ENCODE measurements at regions of chr15 and their contacts with region 1.

Region 1: GRCh38 chr15:64355944-64356709 is at the start of gene CSNK1G1:
- DNase-seq: peak; percentile 57
- H3K4me3 ChIP-seq: peak within 1 kb of the TSS; percentile 68 to 80 (median 72)
- H3K27ac ChIP-seq: peak within 1 kb of the TSS; percentile 79 to 89 (median 81)
- H3K4me1 ChIP-seq: peaks cover 3 to 30% (median 11%) of the 10 kb centered on the region in 3 donors
- H3K27me3 ChIP-seq: no peaks in the 10 kb centered on the region
- CTCF ChIP-seq: peak; percentile 10 to 57 (median 44)
- POLR2A ChIP-seq: peak in 1 of 4 donors; percentile 27
- total RNA-seq, gene CSNK1G1: 15.0 to 21.4 (median 16.8) TPM

Region 2: DNA sequence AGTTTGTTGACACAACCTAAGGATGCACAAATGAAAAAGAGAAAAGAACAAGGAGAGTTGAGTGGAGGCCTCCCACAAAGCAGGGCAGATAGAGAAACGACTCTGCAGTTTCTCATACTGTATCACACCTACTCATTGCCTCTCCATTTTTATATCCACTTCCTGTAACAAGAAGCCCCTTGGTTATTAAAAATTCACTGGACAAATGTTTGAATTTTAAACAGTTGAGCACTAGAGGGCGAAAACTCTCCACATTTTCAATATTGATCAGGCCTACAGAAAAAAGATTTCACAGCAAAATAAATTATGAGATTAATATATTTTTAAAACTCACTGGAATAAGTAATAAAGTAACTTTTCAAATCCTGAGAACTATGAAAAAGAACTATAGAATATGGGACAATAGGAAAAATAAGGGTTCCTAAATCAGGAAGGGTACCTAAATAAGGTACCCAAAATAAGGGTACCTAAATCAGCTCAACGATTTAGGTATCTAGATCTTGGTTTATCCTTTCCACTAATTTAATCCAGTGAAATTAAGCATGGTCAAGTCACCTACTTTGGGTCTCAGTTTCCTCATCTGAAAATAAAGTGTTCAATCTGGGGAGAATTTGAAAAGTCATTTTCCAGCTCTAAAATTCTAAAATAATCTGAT is 146.3 kb before region 1 on chr15:
- intact Hi-C with region 1: loop called (anchors 10 kb)
- DNase-seq: no peak
- H3K4me3 ChIP-seq: no peak overlapping the region
- H3K27ac ChIP-seq: no peak overlapping the region
- H3K4me1 ChIP-seq: no peaks in the 10 kb centered on the region
- H3K27me3 ChIP-seq: no peaks in the 10 kb centered on the region
- CTCF ChIP-seq: peak in 4 of 6 experiments; percentile 32 to 58 (median 43)
- POLR2A ChIP-seq: no peak

Region 3: DNA sequence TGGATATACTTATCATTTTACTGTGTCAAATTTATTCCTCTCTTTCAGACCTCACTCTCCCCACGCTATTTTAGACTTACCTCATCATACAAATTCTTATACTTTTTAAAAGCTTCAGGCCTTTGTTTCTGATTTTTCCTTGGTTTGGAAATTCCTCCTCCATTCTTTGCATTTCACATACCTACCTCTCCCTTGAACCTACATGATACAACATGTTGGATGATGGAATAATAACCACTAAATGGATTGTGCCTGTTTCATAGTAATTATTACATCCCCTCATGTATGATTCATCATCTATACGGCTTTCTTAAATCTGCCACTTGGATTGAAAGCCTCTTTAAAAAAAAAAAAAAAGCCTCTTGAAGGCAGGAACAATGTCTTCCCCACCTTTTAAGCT is 56.1 kb after region 1 on chr15:
- intact Hi-C with region 1: no loop called
- DNase-seq: no peak
- H3K4me3 ChIP-seq: no peak overlapping the region
- H3K27ac ChIP-seq: no peak overlapping the region
- H3K4me1 ChIP-seq: no peaks in the 10 kb centered on the region
- H3K27me3 ChIP-seq: no peaks in the 10 kb centered on the region
- CTCF ChIP-seq: no peak
- POLR2A ChIP-seq: no peak

Measured in esophagus squamous epithelium (tissue), 5 donors.